Endothelial cell of umbilical vein (primary cell): ENCODE measurements at regions of chr19 and their contacts with region 1.

Region 1: DNA sequence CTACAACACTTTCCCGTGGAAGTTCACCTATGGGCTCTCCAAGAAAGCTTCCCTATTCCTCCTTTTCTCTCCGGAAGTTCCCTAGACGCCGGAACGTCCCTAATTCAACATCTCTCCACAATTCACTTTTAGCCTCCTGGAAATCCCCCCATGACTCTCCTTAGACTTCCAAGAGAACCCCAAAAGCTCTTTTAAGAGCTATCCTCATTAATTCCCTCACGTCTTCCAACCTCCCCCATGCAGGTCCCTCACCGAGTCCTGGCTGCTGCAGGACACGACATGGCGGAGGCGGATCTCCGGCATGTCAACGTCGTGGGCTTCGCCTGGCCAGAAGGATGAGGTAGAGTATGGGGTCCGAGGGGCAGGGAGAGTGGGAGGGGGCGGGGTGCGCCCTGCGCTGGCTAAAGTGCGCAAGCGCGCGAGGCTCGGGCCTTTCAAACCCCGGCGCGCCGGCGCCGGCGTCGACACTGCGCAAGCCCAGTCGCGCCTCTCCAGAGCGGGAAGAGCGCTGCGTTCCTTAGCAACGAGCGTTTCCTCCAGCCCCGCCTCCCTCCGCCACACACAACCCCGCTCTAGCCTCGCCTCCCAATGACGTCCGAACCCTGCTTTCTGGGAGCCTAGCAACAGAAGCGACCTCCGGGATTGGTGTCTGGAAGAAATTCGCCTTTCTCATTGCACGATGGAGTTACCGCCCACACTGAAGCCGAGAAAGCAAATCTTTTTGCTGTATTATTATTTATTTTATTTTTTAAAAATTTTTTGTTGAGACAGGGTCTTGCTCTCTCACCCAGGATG is at the starts of genes PINLYP and XRCC1:
- DNase-seq: peak; percentile 99
- H3K4me3 ChIP-seq: peak within 1 kb of the TSS; percentile 52 to 86 (median 79)
- H3K27ac ChIP-seq: peak within 1 kb of the TSS; percentile 73
- H3K4me1 ChIP-seq: peaks cover 7% of the 10 kb centered on the region
- H3K27me3 ChIP-seq: no peaks in the 10 kb centered on the region
- CTCF ChIP-seq: no peak
- POLR2A ChIP-seq: peak; percentile 62
- total RNA-seq, gene PINLYP: 2.6 and 5.5 TPM in 2 replicates
- total RNA-seq, gene XRCC1: 37.3 and 39.3 TPM in 2 replicates

Region 2: DNA sequence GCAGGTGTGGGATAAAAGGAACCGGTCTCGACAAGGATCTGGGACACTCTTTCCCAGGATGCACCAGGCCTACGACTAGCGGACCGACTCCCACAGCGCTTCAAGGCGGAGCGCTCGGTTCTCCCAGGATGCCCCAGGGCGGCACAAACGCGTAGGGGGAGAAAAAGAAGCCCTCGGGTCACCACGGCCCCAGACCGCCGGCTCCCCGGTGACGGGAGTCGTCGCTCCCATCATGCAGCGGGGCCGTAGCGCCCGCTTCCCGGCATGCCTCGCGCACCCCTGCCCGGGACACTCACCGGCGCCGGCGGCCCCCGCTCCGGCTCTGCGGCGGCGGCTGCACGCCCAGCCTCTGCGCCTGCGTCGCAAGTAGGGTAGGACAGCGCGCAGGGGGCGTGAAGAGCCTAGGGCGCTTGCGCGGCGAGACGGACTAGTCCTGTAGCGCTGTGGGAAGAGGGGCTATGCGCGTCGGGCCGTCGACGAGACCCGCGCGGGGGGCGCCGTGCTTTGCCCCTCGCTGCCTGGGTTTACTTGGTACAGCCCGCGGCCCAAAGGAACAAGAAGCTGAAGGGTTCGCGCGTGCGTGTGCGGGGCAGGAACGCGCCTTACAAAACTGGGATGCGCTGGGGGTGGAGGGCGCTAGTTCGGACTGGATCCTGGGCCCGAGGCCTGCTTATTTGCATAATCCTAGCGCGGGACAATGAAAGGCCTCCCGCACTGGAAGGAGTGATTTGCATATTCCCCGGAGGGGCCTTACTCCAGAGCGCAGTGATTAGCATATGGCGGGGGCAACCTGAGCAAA is 44.1 kb after region 1 on chr19 and contains the start of gene ZNF428:
- CTCF ChIA-PET with region 1: no interaction called
- POLR2A ChIA-PET with region 1: interaction called, 3 read pairs
- dilution Hi-C with region 1: no loop called
- intact Hi-C with region 1: loop called (anchors 1 kb)
- DNase-seq: peak; percentile 95
- H3K4me3 ChIP-seq: peak within 1 kb of the TSS; percentile 31 to 75 (median 47)
- H3K27ac ChIP-seq: peak within 1 kb of the TSS; percentile 88
- H3K4me1 ChIP-seq: peaks cover 12% of the 10 kb centered on the region
- H3K27me3 ChIP-seq: no peaks in the 10 kb centered on the region
- CTCF ChIP-seq: no peak
- POLR2A ChIP-seq: peak; percentile 48
- total RNA-seq, gene ZNF428: 51.8 and 56.2 TPM in 2 replicates